Kidney (tissue), 22 donors: ENCODE measurements at regions of chr14 and their contacts with region 1.

Region 1: GRCh38 chr14:77478796-77479195 is 19.8 kb downstream of the ISM2 start:
- DNase-seq: no peak
- H3K4me3 ChIP-seq: no peak overlapping the region
- H3K27ac ChIP-seq: no peak overlapping the region
- H3K4me1 ChIP-seq: peaks cover 0 to 11% (median 1%) of the 10 kb centered on the region in 3 donors
- H3K27me3 ChIP-seq: no peaks in the 10 kb centered on the region
- CTCF ChIP-seq: no peak

Region 2: DNA sequence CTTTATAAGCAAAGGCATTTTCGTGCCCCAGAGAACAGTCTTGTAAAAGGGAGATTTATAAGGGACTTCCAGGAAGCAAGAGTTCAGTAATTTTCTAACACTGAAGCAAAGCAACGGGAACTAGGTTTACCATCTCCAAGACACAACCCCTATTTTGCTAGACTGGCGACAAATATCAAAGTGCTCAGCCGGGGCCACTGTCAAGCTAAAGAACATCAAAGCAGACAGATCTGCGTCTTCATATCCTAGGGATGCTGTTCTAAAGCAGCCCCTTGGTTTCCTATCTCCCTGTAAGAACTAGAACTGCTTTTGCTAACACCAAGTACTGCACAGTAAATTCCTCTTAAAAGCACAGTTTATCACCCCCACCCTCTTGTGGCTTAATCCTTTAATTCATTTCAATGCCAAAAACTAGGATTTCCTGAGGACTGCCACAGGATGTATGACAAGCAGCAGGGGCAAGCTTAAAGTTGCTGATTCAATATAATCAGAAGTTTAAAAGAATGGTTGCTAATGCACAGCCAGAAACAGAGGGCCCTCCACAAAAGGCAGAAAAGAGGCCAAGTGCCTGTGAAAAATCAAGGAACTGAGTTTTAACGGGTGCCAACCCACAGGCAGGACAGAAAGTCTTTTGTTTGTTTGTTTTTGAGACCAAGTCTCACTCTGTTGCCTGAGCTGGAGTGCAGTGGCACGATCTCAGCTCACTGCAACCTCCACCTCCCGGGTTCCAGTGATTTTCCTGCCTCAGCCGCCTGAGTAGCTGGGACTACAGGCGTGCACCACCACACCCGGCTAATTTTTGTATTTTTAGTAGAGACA is 63.8 kb after region 1 on chr14:
- intact Hi-C with region 1: no loop called
- DNase-seq: peak in 2 of 5 donors; percentile 35 to 66
- H3K4me3 ChIP-seq: no peak overlapping the region
- H3K27ac ChIP-seq: peak overlapping the region in 1 of 2 donors; percentile 32
- H3K4me1 ChIP-seq: peaks cover 0 to 4% (median 0%) of the 10 kb centered on the region in 3 donors
- H3K27me3 ChIP-seq: no peaks in the 10 kb centered on the region
- CTCF ChIP-seq: no peak

Region 3: DNA sequence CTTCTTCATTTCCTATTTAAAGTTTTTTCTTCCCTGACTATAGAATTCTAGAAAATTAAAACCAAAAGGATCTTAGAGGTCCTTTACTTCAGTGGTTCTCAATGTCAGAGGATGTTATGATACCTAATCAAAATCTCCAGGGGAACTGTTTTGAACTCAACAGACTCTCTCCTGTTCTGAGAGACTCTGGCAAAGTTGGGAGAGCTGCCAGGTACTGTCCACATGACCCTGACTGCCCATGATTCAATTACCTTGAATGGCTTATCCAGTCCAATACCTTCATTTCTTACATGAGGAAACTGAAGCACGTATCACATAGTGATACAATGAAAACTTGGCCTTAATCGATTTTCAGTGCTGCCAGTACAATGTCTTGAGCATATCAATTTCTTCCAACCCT is 212.5 kb after region 1 on chr14:
- intact Hi-C with region 1: loop called (anchors 10 kb)
- DNase-seq: no peak
- H3K4me3 ChIP-seq: no peak overlapping the region
- H3K27ac ChIP-seq: no peak overlapping the region
- H3K4me1 ChIP-seq: no peaks in the 10 kb centered on the region
- H3K27me3 ChIP-seq: no peaks in the 10 kb centered on the region
- CTCF ChIP-seq: no peak